PC-9 (cell line): ENCODE measurements at regions of chr18 and their contacts with region 1.

Region 1: DNA sequence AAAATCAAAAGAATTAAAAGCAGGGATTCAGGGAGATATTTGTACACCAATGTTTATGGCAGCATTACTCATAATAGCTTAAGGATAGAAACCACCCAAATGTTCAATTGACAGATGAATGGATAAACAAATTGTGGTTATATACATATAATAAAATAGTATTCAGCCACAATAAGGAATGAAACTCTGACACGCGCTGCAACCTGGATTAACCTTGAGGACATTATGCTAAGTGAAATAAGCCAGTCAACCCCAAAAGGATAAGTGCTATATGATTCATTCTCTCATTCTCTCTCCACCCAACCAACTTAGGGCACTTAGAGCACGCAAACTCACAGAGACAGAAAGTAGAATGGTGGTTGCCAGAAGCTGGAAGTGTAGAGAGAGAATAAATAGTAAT is 216.8 kb upstream of the SLC14A2 start:
- DNase-seq: no peak
- H3K4me3 ChIP-seq: no peak overlapping the region
- H3K27ac ChIP-seq: no peak overlapping the region
- H3K4me1 ChIP-seq: 0 out of 2 replicates have a peak, but pooled peaks cover 5% of the 10 kb centered on the region
- H3K27me3 ChIP-seq: no peaks in the 10 kb centered on the region
- CTCF ChIP-seq: no peak

Region 2: DNA sequence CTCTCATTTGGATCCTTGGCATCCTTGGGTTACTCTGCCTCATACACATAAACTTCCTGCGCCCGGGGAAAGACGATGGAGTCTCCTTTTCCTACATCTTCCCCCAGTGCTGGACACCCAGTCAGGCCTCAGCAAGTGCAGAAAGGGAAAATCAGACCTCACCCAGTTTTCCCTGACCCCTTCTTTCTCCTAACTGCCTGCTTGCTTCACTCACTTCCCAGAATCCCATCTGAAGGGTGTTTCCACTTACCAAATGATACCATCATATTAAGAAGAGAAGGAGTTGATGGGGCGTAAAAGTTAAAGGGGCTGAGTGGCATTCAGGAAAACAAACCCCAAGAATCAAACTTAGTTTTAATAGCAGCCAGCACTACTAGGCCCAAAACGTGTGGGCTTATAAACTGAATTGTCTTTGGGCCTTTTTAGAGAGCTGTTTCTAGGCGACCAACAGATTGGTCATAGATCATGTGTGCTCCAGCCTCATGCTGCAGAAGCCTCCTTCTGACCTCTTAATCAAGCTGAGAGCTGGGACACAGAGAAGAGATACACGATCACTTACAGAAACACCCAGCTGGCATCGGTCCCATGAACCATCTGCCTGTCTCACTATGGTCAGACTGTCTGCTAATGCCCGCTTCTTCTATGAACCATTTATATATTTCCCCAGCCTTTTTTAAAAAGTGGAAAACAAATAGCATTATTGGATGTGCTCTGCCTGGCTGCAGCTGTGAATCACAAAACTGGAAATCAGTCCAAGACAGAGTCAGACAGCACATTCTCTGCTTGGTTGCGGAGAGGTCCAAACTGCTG is 51.2 kb after region 1 on chr18:
- CTCF ChIA-PET with region 1: no interaction called
- POLR2A ChIA-PET with region 1: interaction called, 10 read pairs
- intact Hi-C with region 1: no loop called
- DNase-seq: no peak
- H3K4me3 ChIP-seq: no peak overlapping the region
- H3K27ac ChIP-seq: no peak overlapping the region
- H3K4me1 ChIP-seq: no peaks in the 10 kb centered on the region
- H3K27me3 ChIP-seq: no peaks in the 10 kb centered on the region
- CTCF ChIP-seq: no peak

Region 3: GRCh38 chr18:45517181-45517741 is 118.8 kb after region 1 on chr18:
- CTCF ChIA-PET with region 1: no interaction called
- POLR2A ChIA-PET with region 1: no interaction called
- intact Hi-C with region 1: no loop called
- DNase-seq: no peak
- H3K4me3 ChIP-seq: no peak overlapping the region
- H3K27ac ChIP-seq: no peak overlapping the region
- H3K4me1 ChIP-seq: no peaks in the 10 kb centered on the region
- H3K27me3 ChIP-seq: peaks cover 12% of the 10 kb centered on the region; the same call in 1 of the 2 replicates
- CTCF ChIP-seq: no peak